ENCODE measurements at regions of chr3 and their contacts with region 1.

Region 1: GRCh38 chr3:36729204-36730056 is 34.9 kb downstream of the DCLK3 start:
- DNase-seq: no peak
- ATAC-seq: peak; percentile 42 to 73 (median 58)
- H3K4me3 ChIP-seq: no peak overlapping the region
- H3K27ac ChIP-seq: no peak overlapping the region
- H3K4me1 ChIP-seq: peaks cover 8% of the 10 kb centered on the region
- H3K27me3 ChIP-seq: no peaks in the 10 kb centered on the region
- CTCF ChIP-seq: peak; percentile 69

Region 2: GRCh38 chr3:36317915-36318314 is 411.5 kb before region 1 on chr3:
- intact Hi-C with region 1: no loop called
- DNase-seq: no peak
- ATAC-seq: no peak
- H3K4me3 ChIP-seq: no peak overlapping the region
- H3K27ac ChIP-seq: no peak overlapping the region
- H3K4me1 ChIP-seq: no peaks in the 10 kb centered on the region
- H3K27me3 ChIP-seq: no peaks in the 10 kb centered on the region
- CTCF ChIP-seq: no peak

Region 3: DNA sequence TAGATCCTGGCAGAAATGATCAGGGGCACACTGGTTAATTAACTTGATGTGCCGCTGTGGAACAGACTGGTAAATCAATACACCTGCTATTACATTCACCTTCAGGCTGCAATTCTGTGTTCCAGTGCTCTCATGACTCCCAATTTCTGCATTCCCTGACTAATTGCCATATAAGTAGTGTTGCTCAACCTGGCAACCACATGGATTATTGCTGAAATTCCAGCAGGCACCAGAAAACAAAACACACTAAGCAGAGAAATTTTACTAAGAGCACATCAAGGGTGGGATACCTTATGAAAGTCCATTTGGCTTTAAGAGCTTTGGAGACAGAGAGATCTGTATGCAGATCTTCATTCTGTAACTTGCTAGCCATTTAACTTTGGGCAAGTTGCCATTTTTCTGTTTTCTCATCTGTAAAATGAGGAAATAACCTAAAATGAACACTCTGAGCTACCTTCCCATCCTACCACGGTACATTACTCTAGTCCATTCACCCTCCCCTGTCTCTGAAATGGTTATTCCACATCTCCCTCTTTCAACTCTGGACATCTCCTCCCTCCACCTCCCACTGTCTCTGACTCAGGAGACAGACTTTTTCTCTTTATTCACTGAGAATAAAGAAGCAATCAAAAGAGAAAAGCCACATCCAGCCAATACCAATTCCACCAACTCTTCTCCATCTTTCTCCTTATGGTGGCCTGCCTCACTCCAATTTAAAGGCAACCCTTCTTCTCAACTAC is 294.6 kb before region 1 on chr3:
- intact Hi-C with region 1: no loop called
- DNase-seq: no peak
- ATAC-seq: no peak
- H3K4me3 ChIP-seq: no peak overlapping the region
- H3K27ac ChIP-seq: no peak overlapping the region
- H3K4me1 ChIP-seq: no peaks in the 10 kb centered on the region
- H3K27me3 ChIP-seq: no peaks in the 10 kb centered on the region
- CTCF ChIP-seq: no peak

Region 4: GRCh38 chr3:36653095-36653494 is 76.3 kb before region 1 on chr3:
- intact Hi-C with region 1: no loop called
- DNase-seq: no peak
- ATAC-seq: no peak
- H3K4me3 ChIP-seq: no peak overlapping the region
- H3K27ac ChIP-seq: no peak overlapping the region
- H3K4me1 ChIP-seq: no peaks in the 10 kb centered on the region
- H3K27me3 ChIP-seq: no peaks in the 10 kb centered on the region
- CTCF ChIP-seq: no peak

Region 5: DNA sequence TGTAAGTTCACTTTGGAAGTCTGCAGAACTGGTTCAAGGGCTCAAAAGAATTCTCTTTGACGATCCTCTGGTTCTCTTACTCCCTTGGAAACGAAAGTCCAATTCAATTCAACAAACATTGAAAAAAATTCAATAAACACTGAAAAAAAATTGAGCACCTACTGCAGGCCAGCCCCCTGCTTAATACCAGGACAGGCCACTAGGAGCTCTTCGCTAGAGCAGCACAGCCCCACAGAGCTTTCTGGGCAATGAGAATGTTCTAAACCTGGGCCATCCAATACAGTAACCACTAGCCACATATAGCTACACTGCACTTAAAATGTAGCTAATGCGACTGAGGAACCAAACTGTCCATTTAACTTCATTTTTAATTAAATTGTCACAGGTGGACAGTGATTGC is 85.3 kb after region 1 on chr3:
- intact Hi-C with region 1: no loop called
- DNase-seq: no peak
- ATAC-seq: no peak
- H3K4me3 ChIP-seq: no peak overlapping the region
- H3K27ac ChIP-seq: no peak overlapping the region
- H3K4me1 ChIP-seq: no peaks in the 10 kb centered on the region
- H3K27me3 ChIP-seq: no peaks in the 10 kb centered on the region
- CTCF ChIP-seq: no peak

Region 6: DNA sequence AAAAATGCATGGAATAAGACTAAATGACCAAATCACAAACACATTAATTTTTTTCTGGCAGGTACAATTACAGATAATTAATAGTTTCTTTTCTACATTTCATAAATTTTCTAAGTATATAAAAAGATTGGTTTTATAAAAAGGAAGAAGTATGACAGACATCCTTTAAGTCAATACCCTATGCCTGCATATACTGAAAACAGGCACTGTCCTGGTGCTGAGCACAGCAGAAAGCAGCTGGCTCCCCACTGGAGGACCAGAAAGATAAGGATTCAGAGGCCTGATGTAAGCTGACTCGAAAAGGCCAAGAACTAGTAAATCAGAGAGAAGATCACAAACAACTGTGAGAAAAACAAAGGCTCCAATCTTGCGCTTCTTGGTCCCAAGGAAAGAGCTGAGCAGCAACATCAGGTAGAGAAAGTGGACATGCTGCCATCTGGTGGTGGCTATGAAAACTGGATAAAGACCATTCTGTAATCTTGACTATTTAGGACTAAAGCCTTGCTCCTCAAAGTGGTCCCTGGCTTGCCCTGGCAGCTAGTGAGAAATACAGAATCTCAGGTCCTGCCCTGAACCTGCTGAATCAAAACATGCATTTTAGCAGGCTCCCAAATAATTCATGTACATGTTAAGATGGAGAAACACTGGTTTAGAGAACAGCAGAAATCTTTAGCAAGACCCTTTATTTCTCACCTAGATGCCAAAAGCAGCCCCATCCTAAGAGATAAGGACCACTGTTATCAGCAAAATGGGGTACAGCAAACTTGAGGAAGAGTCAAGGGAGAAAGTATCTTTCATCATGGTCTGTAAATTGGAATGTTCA is 139.4 kb after region 1 on chr3:
- intact Hi-C with region 1: loop called (anchors 1 to 5 kb)
- DNase-seq: no peak
- ATAC-seq: peak in 2 of 4 donors; percentile 61 to 69
- H3K4me3 ChIP-seq: no peak overlapping the region
- H3K27ac ChIP-seq: no peak overlapping the region
- H3K4me1 ChIP-seq: no peaks in the 10 kb centered on the region
- H3K27me3 ChIP-seq: no peaks in the 10 kb centered on the region
- CTCF ChIP-seq: peak; percentile 76

Region 7: GRCh38 chr3:36957862-36958686 is 228.6 kb after region 1 on chr3:
- intact Hi-C with region 1: loop called (anchors 2 to 5 kb)
- DNase-seq: no peak
- ATAC-seq: no peak
- H3K4me3 ChIP-seq: no peak overlapping the region
- H3K27ac ChIP-seq: no peak overlapping the region
- H3K4me1 ChIP-seq: no peaks in the 10 kb centered on the region
- H3K27me3 ChIP-seq: no peaks in the 10 kb centered on the region
- CTCF ChIP-seq: no peak